CD8-positive, alpha-beta memory T cell (primary cell): ENCODE measurements at regions of chr13 and their contacts with region 1.

Region 1: DNA sequence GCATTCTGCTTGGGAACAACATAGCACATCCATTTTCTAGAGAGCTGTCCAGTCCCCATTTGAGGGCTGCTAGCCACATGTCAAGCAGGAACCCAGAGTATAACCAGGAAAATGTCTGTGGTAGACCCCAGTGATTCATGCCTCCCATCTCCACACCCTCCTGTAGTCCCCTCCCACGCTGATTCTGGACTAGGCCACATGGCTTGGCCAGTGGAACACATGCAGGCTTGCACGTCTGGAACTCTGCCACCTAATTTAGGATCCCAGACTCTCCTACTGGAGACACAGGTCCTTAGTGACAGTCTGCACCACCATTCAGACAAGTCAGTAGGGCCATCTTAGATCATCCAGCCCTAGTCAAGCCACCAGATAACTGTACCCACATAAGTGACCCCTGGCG is 149.8 kb downstream of the ZIC5 start:
- DNase-seq: no peak
- H3K4me3 ChIP-seq: no peak overlapping the region
- H3K4me3 Mint-ChIP-seq: no peak overlapping the region
- H3K27ac ChIP-seq: no peak overlapping the region
- H3K27ac Mint-ChIP-seq: no peak overlapping the region
- H3K4me1 ChIP-seq: peaks cover 20% of the 10 kb centered on the region
- H3K4me1 Mint-ChIP-seq: peaks cover 19 to 20% (median 20%) of the 10 kb centered on the region in 3 donors
- H3K27me3 ChIP-seq: no peaks in the 10 kb centered on the region
- H3K27me3 Mint-ChIP-seq: peaks cover 0 to 1% of the 10 kb centered on the region in 2 donors

Region 2: GRCh38 chr13:98697791-98698190 is 1124.0 kb before region 1 on chr13:
- CTCF ChIA-PET with region 1: no interaction called
- POLR2A ChIA-PET with region 1: interaction called, 12 read pairs
- DNase-seq: no peak
- H3K4me3 ChIP-seq: no peak overlapping the region
- H3K4me3 Mint-ChIP-seq: no peak overlapping the region
- H3K27ac ChIP-seq: no peak overlapping the region
- H3K27ac Mint-ChIP-seq: no peak overlapping the region
- H3K4me1 ChIP-seq: no peaks in the 10 kb centered on the region
- H3K4me1 Mint-ChIP-seq: peaks cover 0 to 2% (median 0%) of the 10 kb centered on the region in 3 donors
- H3K27me3 ChIP-seq: no peaks in the 10 kb centered on the region
- H3K27me3 Mint-ChIP-seq: peaks cover 19 to 45% of the 10 kb centered on the region in 2 donors

Region 3: DNA sequence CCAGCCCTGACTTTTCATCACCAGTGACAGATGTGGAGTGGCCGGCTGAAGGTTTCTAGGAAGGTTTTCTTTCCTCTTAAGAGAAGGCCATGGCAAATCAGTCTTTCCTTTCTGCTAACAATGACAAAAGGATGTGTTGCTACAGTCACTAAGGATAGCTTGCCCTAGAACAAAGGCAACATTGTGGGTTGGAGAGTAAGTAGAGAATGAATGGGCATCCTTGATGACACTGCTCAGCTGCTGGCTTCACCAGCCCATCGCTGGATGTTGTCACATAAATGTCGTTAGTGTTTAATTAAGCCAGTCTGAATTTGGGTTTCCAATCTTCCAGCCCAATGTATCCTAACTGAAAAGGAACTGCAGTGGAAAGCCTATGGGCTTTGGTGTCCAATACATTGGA is 18.6 kb before region 1 on chr13:
- CTCF ChIA-PET with region 1: no interaction called
- POLR2A ChIA-PET with region 1: no interaction called
- DNase-seq: no peak
- H3K4me3 ChIP-seq: no peak overlapping the region
- H3K4me3 Mint-ChIP-seq: no peak overlapping the region
- H3K27ac ChIP-seq: no peak overlapping the region
- H3K27ac Mint-ChIP-seq: peak overlapping the region in 1 of 8 donors; percentile 30
- H3K4me1 ChIP-seq: no peaks in the 10 kb centered on the region
- H3K4me1 Mint-ChIP-seq: no peaks in the 10 kb centered on the region
- H3K27me3 ChIP-seq: no peaks in the 10 kb centered on the region
- H3K27me3 Mint-ChIP-seq: no peaks in the 10 kb centered on the region

Region 4: DNA sequence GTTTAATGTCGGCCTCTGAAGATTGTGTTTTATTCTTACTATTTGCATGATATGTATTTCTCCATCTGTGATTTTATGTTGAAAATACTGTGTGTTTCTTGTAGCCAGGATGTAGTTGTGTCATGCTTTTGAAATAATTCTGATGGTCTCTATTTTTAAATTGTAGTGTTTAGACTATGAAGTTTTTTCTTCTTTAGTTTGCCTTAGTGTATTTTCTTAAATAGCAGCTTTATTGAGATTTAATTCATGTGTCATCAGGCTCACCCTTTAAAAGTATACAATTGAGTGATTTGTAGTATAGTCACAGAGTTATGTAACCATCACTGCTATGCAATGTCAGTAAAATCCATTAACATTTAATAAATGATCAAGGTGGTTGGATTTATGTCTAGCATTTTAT is 341.6 kb after region 1 on chr13:
- CTCF ChIA-PET with region 1: no interaction called
- POLR2A ChIA-PET with region 1: no interaction called
- DNase-seq: no peak
- H3K4me3 ChIP-seq: no peak overlapping the region
- H3K4me3 Mint-ChIP-seq: no peak overlapping the region
- H3K27ac ChIP-seq: no peak overlapping the region
- H3K27ac Mint-ChIP-seq: peak overlapping the region in 1 of 8 donors; percentile 9
- H3K4me1 ChIP-seq: no peaks in the 10 kb centered on the region
- H3K4me1 Mint-ChIP-seq: peaks cover 0 to 11% (median 1%) of the 10 kb centered on the region in 3 donors
- H3K27me3 ChIP-seq: no peaks in the 10 kb centered on the region
- H3K27me3 Mint-ChIP-seq: no peaks in the 10 kb centered on the region